RWPE1 (cell line): ENCODE measurements at regions of chr11 and their contacts with region 1.

Region 1: DNA sequence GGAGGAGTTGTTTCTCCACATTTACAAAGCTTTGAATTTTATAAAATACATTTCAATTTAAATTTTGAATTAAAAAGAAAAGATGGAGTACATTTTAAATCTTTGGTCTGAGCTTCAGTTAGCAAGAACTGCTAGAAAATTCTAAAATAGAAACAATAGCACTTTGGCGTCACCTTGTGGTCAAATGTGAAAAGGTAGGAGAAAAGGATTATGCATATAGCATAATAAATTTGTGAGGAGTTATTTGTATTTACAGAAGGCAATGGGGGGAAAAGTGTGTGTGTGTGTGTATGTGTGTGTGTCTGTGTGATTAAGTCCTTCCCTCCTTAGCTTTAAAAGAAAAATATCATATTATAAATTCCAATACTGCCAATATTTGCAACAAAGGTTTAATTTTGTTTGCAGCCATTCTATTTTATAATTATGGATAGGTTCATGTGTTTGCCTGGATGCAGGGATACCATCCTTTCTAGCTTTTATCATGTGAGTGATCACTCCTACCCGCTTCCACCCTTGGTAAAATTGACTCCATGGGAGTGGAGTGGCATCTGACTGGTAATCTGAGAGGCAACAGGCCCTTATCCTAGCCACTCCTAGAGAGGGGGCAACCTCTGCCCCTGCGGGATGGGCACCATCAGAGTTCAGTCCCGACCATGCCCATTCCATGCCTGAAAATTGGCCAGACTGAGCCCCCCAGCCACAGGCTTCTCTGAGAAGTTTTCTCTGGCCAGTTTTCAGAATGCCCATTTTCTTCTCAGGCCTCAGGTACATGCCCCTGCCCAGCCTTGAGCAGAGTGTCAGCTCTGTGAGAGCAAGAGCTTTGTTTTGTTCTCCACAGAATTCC is 13.6 kb upstream of the LGR4 start:
- DNase-seq: no peak
- H3K27ac ChIP-seq: peak overlapping the region; percentile 40; the same call in 1 of the 2 replicates
- CTCF ChIP-seq: peak; percentile 97

Region 2: GRCh38 chr11:27183672-27184457 is 302.3 kb before region 1 on chr11:
- CTCF ChIA-PET with region 1: interaction called, 20 read pairs
- POLR2A ChIA-PET with region 1: no interaction called
- DNase-seq: peak; percentile 38
- H3K27ac ChIP-seq: no peak overlapping the region
- CTCF ChIP-seq: peak; percentile 74

Region 3: GRCh38 chr11:27280140-27280539 is 206.0 kb before region 1 on chr11:
- CTCF ChIA-PET with region 1: no interaction called
- POLR2A ChIA-PET with region 1: no interaction called
- DNase-seq: no peak
- H3K27ac ChIP-seq: no peak overlapping the region
- CTCF ChIP-seq: no peak

Region 4: GRCh38 chr11:27296497-27296896 is 189.7 kb before region 1 on chr11:
- CTCF ChIA-PET with region 1: interaction called, 11 read pairs
- POLR2A ChIA-PET with region 1: no interaction called
- DNase-seq: peak; percentile 52
- H3K27ac ChIP-seq: no peak overlapping the region
- CTCF ChIP-seq: peak; percentile 75

Region 5: DNA sequence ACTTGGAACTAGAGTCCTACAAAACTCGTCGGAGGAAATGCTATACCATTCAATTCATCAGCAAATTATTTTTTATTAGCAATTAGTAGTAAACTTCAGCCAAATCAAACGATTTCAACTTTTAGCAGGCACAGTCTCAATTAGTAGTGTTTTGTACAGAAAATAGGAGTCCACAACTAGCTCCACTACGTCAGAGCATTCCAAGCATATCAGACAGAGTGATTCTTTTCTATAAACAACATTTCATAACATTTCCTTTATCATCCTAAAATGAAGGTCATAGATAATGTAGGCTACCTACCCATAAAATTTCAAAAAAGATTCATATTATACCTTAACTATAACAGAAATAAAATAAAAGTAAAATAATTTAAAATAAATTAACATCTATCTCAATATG is 451.9 kb after region 1 on chr11:
- CTCF ChIA-PET with region 1: no interaction called
- POLR2A ChIA-PET with region 1: no interaction called
- DNase-seq: no peak
- H3K27ac ChIP-seq: no peak overlapping the region
- CTCF ChIP-seq: no peak